MCF 10A (cell line): ENCODE measurements at regions of chr2 and their contacts with region 1.

Region 1: DNA sequence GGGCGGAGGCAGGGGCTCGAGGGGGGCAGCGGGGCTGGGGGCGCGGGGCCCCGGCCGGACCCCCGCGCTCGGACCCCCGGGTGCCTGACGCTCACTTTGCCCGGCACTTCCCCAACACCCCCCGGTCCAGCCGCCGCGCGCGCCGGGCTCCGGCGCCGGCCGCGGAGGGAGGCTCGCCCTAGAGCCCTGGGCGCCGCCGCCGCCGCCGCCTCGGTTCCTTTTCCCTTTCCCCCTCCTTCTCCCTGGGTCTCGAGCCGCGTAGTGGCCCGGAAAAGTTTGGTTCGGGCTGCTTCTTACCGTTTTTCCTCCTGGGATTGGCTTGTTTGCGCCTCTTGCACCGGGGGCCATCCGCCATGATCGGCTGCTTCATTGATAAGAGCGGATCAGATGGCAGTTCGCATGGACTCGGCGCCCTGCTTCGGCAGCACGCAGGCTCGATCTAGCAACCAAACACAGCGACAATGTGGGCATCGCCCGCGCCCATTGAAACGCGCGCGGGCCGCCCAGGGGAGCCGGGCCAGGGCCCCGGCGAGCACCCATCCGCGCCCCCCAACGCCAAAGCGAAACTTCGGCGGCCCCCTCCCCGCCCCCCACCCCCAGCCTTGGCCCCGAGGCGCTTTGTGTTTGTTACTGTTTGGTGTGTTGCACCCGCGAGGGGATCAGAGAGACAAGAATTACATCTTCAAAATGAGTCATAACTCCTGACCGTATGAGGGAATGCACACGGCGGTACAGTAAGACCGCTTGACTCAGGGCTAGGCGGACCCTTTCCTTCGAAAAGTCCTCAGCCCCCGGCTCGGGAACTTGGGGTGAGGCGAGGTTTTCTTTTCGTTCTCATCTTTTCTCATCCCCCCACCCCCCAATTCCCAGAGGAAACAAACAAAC is 2.7 kb downstream of the ZEB2 start:
- DNase-seq: peak; percentile 82
- H3K4me3 Mint-ChIP-seq: no peak overlapping the region
- H3K27ac Mint-ChIP-seq: no peak overlapping the region
- H3K4me1 Mint-ChIP-seq: peaks cover 31% of the 10 kb centered on the region
- H3K27me3 Mint-ChIP-seq: no peaks in the 10 kb centered on the region
- CTCF ChIP-seq: no peak

Region 2: GRCh38 chr2:143686585-143687164 is 830.5 kb before region 1 on chr2:
- CTCF ChIA-PET with region 1: no interaction called
- POLR2A ChIA-PET with region 1: no interaction called
- intact Hi-C with region 1: loop called (anchors 10 kb)
- DNase-seq: peak; percentile 58
- H3K4me3 Mint-ChIP-seq: no peak overlapping the region
- H3K27ac Mint-ChIP-seq: no peak overlapping the region
- H3K4me1 Mint-ChIP-seq: no peaks in the 10 kb centered on the region
- H3K27me3 Mint-ChIP-seq: no peaks in the 10 kb centered on the region
- CTCF ChIP-seq: peak; percentile 63

Region 3: DNA sequence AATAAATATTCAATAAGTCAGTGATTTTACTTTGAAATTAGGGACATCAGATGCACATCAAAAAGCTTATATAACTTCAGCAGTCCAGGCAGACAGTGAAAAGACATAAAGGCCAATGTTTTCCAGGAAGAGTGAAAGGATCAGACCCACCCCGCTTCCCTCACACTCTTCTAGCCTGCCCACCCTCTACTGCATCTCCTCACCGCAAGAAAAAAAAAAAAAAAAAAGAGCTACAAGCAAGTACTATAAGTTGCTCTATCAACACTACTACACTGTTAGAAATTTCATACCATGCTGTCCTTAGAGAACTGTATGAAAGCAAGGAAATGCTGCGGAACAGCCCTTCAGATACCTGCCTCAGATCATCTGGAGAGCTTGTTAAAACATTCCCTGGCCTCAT is 238.1 kb before region 1 on chr2:
- CTCF ChIA-PET with region 1: no interaction called
- POLR2A ChIA-PET with region 1: no interaction called
- intact Hi-C with region 1: no loop called
- DNase-seq: no peak
- H3K4me3 Mint-ChIP-seq: no peak overlapping the region
- H3K27ac Mint-ChIP-seq: no peak overlapping the region
- H3K4me1 Mint-ChIP-seq: no peaks in the 10 kb centered on the region
- H3K27me3 Mint-ChIP-seq: no peaks in the 10 kb centered on the region
- CTCF ChIP-seq: no peak

Region 4: DNA sequence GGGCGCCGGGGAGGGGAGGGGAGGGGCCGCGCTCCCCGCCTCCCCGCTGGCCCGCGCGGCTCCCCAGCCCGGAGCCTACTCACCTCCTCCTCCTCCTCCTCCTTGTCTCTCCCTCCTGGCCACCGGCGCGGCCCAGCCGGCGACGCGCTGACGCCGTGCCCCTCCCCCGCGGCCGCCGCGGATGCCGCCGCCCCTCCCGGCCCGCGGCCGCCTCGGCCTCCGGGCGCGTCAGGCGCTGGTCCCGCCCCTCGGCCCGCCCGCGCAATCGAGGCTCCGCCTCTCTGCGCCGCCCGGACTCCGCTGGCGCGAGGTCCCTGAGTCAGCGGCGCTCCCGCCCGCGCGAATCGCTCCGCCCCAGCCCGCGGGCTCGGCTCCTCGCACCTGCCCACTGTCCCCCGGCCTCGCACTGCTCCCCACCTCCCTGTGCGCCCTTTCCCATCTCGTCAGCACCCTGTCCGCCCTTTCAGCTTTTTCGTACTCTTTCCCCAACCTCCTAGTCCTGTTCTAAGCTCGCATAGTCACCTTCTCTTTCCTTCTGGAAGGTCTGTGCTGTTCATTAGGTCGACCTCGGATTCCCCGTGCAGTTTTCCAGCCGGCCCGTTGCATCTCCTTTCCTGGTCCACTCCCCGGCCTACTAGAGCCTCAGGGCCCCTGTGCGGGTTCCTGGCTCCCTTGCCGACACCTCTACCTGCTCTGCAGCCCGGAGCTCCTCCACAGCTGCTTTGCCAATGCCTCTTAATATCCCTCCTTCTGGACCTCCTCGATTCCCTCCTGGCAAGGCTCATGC is 184.7 kb before region 1 on chr2:
- CTCF ChIA-PET with region 1: no interaction called
- POLR2A ChIA-PET with region 1: interaction called, 3 read pairs
- intact Hi-C with region 1: loop called (anchors 2 kb)
- DNase-seq: peak; percentile 82
- H3K4me3 Mint-ChIP-seq: peak overlapping the region; percentile 76
- H3K27ac Mint-ChIP-seq: peak overlapping the region; percentile 74
- H3K4me1 Mint-ChIP-seq: peaks cover 6% of the 10 kb centered on the region
- H3K27me3 Mint-ChIP-seq: no peaks in the 10 kb centered on the region
- CTCF ChIP-seq: no peak

Region 5: GRCh38 chr2:144553379-144553778 is 36.2 kb after region 1 on chr2:
- CTCF ChIA-PET with region 1: no interaction called
- POLR2A ChIA-PET with region 1: interaction called, 4 read pairs
- intact Hi-C with region 1: loop called (anchors 1 kb)
- DNase-seq: peak; percentile 92
- H3K4me3 Mint-ChIP-seq: no peak overlapping the region
- H3K27ac Mint-ChIP-seq: peak overlapping the region; percentile 99
- H3K4me1 Mint-ChIP-seq: peaks cover 39% of the 10 kb centered on the region
- H3K27me3 Mint-ChIP-seq: no peaks in the 10 kb centered on the region
- CTCF ChIP-seq: no peak

Region 6: GRCh38 chr2:144671695-144672455 is 154.7 kb after region 1 on chr2:
- CTCF ChIA-PET with region 1: no interaction called
- POLR2A ChIA-PET with region 1: no interaction called
- intact Hi-C with region 1: no loop called
- DNase-seq: peak; percentile 39
- H3K4me3 Mint-ChIP-seq: no peak overlapping the region
- H3K27ac Mint-ChIP-seq: no peak overlapping the region
- H3K4me1 Mint-ChIP-seq: peaks cover 7% of the 10 kb centered on the region
- H3K27me3 Mint-ChIP-seq: no peaks in the 10 kb centered on the region
- CTCF ChIP-seq: no peak

Region 7: GRCh38 chr2:144834998-144835633 is 317.9 kb after region 1 on chr2:
- CTCF ChIA-PET with region 1: no interaction called
- POLR2A ChIA-PET with region 1: no interaction called
- intact Hi-C with region 1: loop called (anchors 10 kb)
- DNase-seq: peak; percentile 79
- H3K4me3 Mint-ChIP-seq: no peak overlapping the region
- H3K27ac Mint-ChIP-seq: no peak overlapping the region
- H3K4me1 Mint-ChIP-seq: peaks cover 13% of the 10 kb centered on the region
- H3K27me3 Mint-ChIP-seq: no peaks in the 10 kb centered on the region
- CTCF ChIP-seq: no peak

Region 8: DNA sequence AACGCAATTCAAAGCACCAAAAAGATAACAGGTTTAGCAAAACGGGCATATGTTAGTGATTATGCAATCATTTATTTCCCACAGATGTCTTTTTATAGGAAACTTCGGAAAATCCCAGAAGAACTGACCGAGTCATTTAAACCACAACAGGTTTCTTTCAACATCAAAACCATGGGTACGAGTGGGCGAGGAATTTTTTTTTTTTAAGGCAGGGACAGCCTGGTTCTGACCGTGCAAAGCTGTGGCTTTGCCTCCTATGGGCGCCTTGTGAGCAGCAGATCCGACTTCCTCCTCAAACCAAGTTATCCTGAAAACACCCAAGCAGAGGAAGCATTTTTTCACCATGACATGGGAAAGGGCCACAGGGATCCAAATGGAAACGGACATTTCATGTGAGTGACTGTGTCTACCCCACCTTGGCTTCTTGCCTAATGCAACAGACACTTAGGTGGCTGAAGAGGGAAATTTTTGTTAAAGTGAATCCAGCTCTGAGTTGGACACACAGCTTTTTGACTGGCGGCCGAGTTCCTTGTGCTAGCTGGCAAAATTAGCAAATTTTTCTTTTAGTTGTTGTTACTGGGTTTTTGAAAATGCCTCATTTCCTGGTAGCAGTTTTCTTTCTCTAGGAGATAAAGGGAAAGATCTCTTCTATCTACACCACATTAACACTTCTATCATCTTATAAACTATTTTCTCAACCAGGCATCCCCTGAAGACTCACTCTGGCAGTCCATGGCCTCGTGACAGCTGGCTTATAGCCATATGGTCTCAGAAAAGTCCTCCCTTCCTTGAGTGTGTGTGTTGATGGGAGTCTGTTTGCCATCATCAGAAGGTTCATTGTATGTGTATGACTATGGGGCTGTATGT is 490.1 kb after region 1 on chr2:
- CTCF ChIA-PET with region 1: no interaction called
- POLR2A ChIA-PET with region 1: interaction called, 3 read pairs
- intact Hi-C with region 1: loop called (anchors 5 kb)
- DNase-seq: peak; percentile 97
- H3K4me3 Mint-ChIP-seq: peak overlapping the region; percentile 59
- H3K27ac Mint-ChIP-seq: peak overlapping the region; percentile 89
- H3K4me1 Mint-ChIP-seq: peaks cover 31% of the 10 kb centered on the region
- H3K27me3 Mint-ChIP-seq: no peaks in the 10 kb centered on the region
- CTCF ChIP-seq: no peak

Region 9: GRCh38 chr2:145752091-145752806 is 1235.0 kb after region 1 on chr2:
- CTCF ChIA-PET with region 1: no interaction called
- POLR2A ChIA-PET with region 1: no interaction called
- intact Hi-C with region 1: loop called (anchors 1 kb)
- DNase-seq: peak; percentile 93
- H3K4me3 Mint-ChIP-seq: peak overlapping the region; percentile 20
- H3K27ac Mint-ChIP-seq: peak overlapping the region; percentile 75
- H3K4me1 Mint-ChIP-seq: peaks cover 30% of the 10 kb centered on the region
- H3K27me3 Mint-ChIP-seq: no peaks in the 10 kb centered on the region
- CTCF ChIP-seq: peak; percentile 55